Right lobe of liver (tissue), 6 donors: ENCODE measurements at regions of chr3 and their contacts with region 1.

Region 1: DNA sequence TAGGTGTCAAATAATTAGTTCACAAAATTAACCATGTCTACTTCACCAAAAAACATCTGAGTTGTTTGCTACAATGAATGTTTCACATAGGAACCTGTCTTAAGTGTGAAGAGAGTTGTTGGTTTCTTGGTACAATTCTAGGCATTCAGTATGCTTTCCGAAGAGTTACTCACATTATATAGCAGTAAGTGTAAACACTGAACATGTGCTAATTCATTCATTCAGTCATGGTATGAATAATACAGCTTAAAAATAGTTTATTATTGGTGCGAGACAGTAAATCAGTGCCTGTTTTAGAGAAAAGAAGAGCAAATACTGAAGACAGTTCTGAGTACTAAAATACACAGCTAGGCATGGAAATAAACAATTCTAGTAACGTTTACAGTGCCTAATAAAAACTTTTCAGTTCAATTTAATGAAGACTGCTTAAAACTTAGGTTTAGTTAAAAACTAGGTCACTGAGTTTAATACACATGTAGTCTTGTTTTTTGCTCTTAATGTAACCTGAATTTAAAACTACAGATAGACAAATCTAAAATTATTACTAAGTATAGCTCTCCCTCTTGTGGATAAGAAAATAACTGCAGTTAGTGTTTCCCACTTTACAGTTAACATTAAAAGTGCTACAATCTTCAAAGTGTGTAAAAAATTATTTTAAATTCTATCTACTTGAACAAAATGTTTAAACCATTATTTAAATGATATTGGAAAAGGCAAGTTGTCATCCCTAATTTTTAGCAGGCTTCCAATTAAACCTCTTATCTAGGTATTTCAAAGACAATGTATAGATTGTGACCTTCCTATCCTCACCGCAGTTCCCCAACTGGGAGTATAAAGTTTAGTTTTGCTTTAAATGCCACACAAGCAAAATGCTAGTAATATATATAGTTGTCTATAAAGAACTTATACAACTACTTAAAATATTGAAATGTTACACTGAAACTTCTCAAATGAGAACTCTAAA is 20.1 kb upstream of the ZCWPW2 start:
- DNase-seq: no peak
- ATAC-seq: peak; percentile 54 to 74 (median 70)
- H3K4me3 ChIP-seq: no peak overlapping the region
- H3K27ac ChIP-seq: no peak overlapping the region
- H3K4me1 ChIP-seq: no peaks in the 10 kb centered on the region
- H3K27me3 ChIP-seq: no peaks in the 10 kb centered on the region
- CTCF ChIP-seq: peak; percentile 62 to 77 (median 66)
- POLR2A ChIP-seq: no peak

Region 2: GRCh38 chr3:27712136-27713077 is 616.1 kb before region 1 on chr3:
- intact Hi-C with region 1: loop called in 1 of 2 experiments (anchors 10 kb)
- DNase-seq: peak; percentile 79 to 81 (median 80)
- ATAC-seq: peak; percentile 95 to 98 (median 96)
- H3K4me3 ChIP-seq: peak overlapping the region; percentile 30 to 53 (median 52)
- H3K27ac ChIP-seq: no peak overlapping the region
- H3K4me1 ChIP-seq: peaks cover 0 to 29% (median 0%) of the 10 kb centered on the region in 4 donors
- H3K27me3 ChIP-seq: peaks cover 0 to 23% of the 10 kb centered on the region in 2 donors
- CTCF ChIP-seq: peak; percentile 64 to 79 (median 74)
- POLR2A ChIP-seq: no peak